ENCODE measurements at regions of chr5 and their contacts with region 1.

Region 1: DNA sequence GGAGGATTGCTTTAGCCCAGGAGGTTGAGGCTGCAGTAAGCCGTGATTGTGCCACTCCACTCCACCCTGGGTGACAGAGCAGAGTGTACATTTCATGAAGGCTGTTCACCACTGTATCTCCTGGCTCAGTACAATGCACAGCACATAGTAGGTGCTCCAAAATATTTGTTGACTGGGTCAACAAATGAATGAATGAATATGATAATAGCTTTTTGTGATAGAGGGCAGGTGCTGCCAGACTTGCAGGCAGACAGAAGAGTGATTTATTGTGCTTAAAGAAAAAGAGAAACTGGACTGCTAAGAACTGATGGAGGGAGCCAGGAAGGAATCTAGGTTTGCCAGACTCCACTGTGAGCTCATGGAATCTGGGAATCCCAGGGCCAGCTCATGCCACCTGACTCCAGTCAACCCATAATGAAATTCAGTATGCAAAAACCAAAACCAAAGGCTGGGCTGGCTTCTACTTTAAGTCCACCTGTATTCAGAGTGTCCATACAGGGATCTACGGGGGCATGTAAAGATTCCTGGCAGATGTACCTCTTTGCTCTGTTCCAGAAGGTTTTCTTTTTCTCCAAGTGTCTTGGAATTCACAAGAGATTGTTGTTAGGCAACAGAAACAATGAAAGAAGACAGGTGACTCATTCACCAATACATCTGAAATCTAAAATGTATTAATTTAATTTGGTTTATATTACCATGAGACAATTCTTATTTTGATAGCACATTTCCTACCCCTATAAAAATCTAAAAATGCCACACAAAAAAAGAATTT is 15.5 kb upstream of the CTNNA1 start:
- DNase-seq: no peak
- H3K4me3 Mint-ChIP-seq: no peak overlapping the region
- H3K27ac Mint-ChIP-seq: peak overlapping the region; percentile 92
- H3K4me1 Mint-ChIP-seq: peaks cover 38% of the 10 kb centered on the region
- H3K27me3 Mint-ChIP-seq: peaks cover 10% of the 10 kb centered on the region

Region 2: GRCh38 chr5:138482638-138483037 is 255.0 kb before region 1 on chr5:
- intact Hi-C with region 1: no loop called
- DNase-seq: no peak
- H3K4me3 Mint-ChIP-seq: no peak overlapping the region
- H3K27ac Mint-ChIP-seq: no peak overlapping the region
- H3K4me1 Mint-ChIP-seq: peaks cover 2% of the 10 kb centered on the region
- H3K27me3 Mint-ChIP-seq: peaks cover 11% of the 10 kb centered on the region

Region 3: DNA sequence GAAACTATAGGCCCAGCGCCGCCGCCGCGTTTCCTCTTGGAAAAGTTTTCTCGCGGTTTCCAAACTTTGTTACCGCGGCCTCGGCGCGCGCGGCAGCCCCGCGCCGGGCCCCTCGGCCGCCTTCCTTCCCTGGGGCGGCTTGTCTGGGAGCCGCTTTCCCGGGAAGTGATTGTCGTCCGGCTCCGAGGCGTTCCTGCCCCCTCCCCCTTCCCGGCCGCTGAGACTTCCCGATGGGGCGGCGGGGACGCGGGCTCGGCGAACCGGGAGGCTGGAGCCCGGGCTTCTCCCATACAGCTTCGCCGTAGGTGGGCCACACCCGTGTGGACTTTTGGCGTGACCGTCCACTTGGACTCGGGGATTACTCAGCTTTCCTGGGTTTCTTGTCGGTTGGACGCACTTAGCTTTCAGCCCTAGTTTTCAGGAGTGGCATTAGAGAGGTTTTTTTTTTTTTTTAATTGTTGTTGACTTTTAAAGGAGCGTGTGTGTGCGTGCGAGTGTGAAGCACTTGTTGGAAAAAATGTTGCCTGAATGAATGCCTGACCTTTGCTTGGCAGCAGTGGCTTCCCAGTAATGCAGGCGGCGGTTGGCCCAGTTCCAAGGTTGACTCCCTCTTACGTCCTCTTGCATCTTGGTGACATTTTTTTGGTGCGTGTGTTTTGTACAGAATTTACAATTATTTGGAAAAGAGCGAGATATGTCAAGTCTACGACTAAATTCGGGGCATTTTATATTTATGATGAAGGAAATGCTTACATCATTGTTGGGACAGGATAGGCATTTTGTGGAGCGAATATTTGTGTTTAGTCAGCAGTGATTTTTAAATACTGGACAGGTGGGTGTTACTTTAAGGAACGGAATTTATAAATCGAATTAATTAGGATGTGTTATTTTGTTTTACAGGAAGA is 16.4 kb after region 1 on chr5:
- intact Hi-C with region 1: loop called (anchors 1 kb)
- DNase-seq: peak; percentile 17
- H3K4me3 Mint-ChIP-seq: peak overlapping the region; percentile 95
- H3K27ac Mint-ChIP-seq: peak overlapping the region; percentile 85
- H3K4me1 Mint-ChIP-seq: peaks cover 36% of the 10 kb centered on the region
- H3K27me3 Mint-ChIP-seq: peaks cover 7% of the 10 kb centered on the region

Region 4: DNA sequence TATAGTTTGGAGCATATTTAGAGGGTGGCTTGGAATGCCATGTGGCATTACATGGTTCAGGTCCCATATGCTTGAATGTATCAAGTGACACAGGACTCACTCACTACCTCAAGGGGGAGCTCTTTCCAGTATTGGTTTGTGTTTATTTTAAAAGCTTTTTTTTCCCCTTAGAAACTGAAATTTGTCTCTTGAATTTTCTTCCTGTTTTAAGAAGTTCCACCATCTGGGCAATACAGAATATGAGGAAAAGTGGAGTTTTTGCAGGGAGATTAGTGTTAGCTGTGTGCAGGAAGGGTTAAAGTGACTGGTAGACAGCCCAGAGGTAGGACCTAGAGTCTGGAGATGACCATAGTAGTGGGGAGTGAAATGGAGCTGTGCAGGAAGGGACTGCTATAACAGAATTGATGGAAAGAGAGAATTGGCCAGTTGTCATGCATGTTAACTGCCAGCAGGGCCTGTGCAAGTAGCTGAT is 52.1 kb after region 1 on chr5:
- intact Hi-C with region 1: loop called (anchors 5 kb)
- DNase-seq: no peak
- H3K4me3 Mint-ChIP-seq: no peak overlapping the region
- H3K27ac Mint-ChIP-seq: peak overlapping the region; percentile 24
- H3K4me1 Mint-ChIP-seq: peaks cover 31% of the 10 kb centered on the region
- H3K27me3 Mint-ChIP-seq: peaks cover 1% of the 10 kb centered on the region

Measured in activated T-helper 2 cell treated with anti-CD3 and anti-CD28 coated beads, Interferon-gamma antibody, Interleukin-2, Interleukin-4, amounts not matched to agents 10 μg/mL and 5 μg/mL and 100 μg/mL, durations not matched to agents 14 hours and 24 hours and 36 hours (primary cell).